ENCODE measurements at regions of chr9 and their contacts with region 1.

Region 1: GRCh38 chr9:2645569-2645968 is 24.0 kb downstream of the VLDLR start:
- DNase-seq: no peak
- H3K4me3 ChIP-seq: no peak overlapping the region
- H3K27ac ChIP-seq: no peak overlapping the region
- H3K4me1 ChIP-seq: no peaks in the 10 kb centered on the region
- H3K27me3 ChIP-seq: no peaks in the 10 kb centered on the region
- CTCF ChIP-seq: no peak
- EP300 ChIP-seq: no peak
- POLR2A ChIP-seq: no peak

Region 2: GRCh38 chr9:2691626-2692025 is 46.1 kb after region 1 on chr9:
- intact Hi-C with region 1: no loop called
- DNase-seq: no peak
- H3K4me3 ChIP-seq: no peak overlapping the region
- H3K27ac ChIP-seq: no peak overlapping the region
- H3K4me1 ChIP-seq: no peaks in the 10 kb centered on the region
- H3K27me3 ChIP-seq: no peaks in the 10 kb centered on the region
- CTCF ChIP-seq: no peak
- EP300 ChIP-seq: no peak
- POLR2A ChIP-seq: no peak

Region 3: GRCh38 chr9:2824564-2824963 is 179.0 kb after region 1 on chr9:
- intact Hi-C with region 1: loop called (anchors 10 kb)
- DNase-seq: no peak
- H3K4me3 ChIP-seq: no peak overlapping the region
- H3K27ac ChIP-seq: no peak overlapping the region
- H3K4me1 ChIP-seq: peaks cover 0 to 5% (median 0%) of the 10 kb centered on the region in 4 donors
- H3K27me3 ChIP-seq: no peaks in the 10 kb centered on the region
- CTCF ChIP-seq: peak in 1 of 3 experiments; percentile 8
- EP300 ChIP-seq: no peak
- POLR2A ChIP-seq: no peak

Measured in esophagus muscularis mucosa (tissue), 4 donors.